ENCODE measurements at regions of chr19 and their contacts with region 1.

Region 1: DNA sequence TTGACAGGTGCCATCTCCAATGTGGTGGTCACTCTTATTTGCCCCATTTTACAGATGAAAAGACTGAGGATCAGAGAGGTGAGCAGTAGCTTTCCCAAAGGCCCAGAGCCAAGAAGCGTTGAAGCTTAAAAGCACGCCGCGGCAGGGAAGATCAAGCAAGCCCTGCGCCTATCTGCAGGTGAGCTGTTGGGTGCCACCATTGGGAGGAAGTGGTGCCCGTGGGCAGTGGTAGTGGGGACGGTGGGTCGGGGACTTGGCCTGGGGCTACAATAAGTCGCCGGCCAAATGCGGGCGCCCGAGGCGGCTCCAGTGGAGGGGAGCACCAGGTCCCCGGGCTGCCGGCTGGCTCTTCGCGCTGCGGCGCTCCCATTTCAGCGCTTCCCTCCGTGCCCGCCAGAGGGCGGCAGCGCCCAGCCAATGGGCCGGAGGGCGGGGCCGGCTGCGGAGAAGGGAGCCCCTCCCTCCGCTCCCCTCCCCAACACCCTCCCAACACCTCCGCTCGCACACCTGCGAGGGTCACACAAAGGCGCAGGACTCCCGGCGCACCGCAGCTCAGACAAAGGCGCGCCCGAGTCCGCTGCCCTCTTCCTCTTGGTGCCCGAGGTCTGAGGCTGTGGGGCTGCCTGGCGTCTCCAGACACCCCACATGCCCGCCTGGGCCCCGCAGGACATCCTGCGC is 744 bp upstream of the POU2F2 start:
- DNase-seq: peak; percentile 81
- H3K4me3 Mint-ChIP-seq: peak overlapping the region; percentile 92
- H3K27ac Mint-ChIP-seq: peak overlapping the region; percentile 91
- H3K4me1 Mint-ChIP-seq: peaks cover 46% of the 10 kb centered on the region
- H3K27me3 Mint-ChIP-seq: no peaks in the 10 kb centered on the region

Region 2: DNA sequence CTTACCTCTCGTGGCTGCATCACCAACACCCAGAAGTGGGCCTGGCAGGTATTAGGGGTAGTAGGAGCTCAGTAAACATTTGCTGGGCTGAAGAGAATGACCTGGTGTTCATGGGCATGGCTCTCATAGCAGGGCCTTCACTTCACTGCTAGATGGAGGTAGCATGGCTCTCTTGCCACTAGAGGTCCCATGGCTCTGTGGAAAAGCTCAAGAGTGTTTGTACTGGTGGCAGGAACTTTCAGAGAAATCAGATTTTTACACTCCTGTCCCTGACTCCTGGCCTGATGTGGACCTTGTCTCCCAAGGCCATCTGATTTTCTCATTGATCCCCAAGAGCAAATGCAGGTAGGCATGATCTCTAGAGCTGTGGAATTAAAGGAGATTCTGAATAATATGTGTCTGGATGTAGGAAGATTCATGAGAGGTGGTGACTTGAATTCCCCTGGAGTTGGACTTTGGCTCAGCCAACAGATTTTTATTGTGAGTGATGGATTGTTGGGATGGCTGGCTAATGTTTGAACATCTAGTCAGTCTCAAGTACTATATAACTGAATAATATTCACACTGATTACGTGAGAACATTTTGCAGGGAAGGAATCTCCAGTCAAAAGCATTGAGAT is 51.3 kb before region 1 on chr19:
- intact Hi-C with region 1: no loop called
- DNase-seq: no peak
- H3K4me3 Mint-ChIP-seq: no peak overlapping the region
- H3K27ac Mint-ChIP-seq: no peak overlapping the region
- H3K4me1 Mint-ChIP-seq: peaks cover 26% of the 10 kb centered on the region
- H3K27me3 Mint-ChIP-seq: no peaks in the 10 kb centered on the region

Region 3: GRCh38 chr19:42121656-42122069 is 11.3 kb before region 1 on chr19:
- intact Hi-C with region 1: loop called (anchors 1 kb)
- DNase-seq: peak; percentile 57
- H3K4me3 Mint-ChIP-seq: peak overlapping the region; percentile 71
- H3K27ac Mint-ChIP-seq: peak overlapping the region; percentile 95
- H3K4me1 Mint-ChIP-seq: peaks cover 49% of the 10 kb centered on the region
- H3K27me3 Mint-ChIP-seq: no peaks in the 10 kb centered on the region

Region 4: GRCh38 chr19:42184401-42184861 is 51.4 kb after region 1 on chr19:
- intact Hi-C with region 1: loop called (anchors 1 kb)
- DNase-seq: peak; percentile 56
- H3K4me3 Mint-ChIP-seq: no peak overlapping the region
- H3K27ac Mint-ChIP-seq: peak overlapping the region; percentile 56
- H3K4me1 Mint-ChIP-seq: peaks cover 29% of the 10 kb centered on the region
- H3K27me3 Mint-ChIP-seq: peaks cover 14% of the 10 kb centered on the region

Region 5: DNA sequence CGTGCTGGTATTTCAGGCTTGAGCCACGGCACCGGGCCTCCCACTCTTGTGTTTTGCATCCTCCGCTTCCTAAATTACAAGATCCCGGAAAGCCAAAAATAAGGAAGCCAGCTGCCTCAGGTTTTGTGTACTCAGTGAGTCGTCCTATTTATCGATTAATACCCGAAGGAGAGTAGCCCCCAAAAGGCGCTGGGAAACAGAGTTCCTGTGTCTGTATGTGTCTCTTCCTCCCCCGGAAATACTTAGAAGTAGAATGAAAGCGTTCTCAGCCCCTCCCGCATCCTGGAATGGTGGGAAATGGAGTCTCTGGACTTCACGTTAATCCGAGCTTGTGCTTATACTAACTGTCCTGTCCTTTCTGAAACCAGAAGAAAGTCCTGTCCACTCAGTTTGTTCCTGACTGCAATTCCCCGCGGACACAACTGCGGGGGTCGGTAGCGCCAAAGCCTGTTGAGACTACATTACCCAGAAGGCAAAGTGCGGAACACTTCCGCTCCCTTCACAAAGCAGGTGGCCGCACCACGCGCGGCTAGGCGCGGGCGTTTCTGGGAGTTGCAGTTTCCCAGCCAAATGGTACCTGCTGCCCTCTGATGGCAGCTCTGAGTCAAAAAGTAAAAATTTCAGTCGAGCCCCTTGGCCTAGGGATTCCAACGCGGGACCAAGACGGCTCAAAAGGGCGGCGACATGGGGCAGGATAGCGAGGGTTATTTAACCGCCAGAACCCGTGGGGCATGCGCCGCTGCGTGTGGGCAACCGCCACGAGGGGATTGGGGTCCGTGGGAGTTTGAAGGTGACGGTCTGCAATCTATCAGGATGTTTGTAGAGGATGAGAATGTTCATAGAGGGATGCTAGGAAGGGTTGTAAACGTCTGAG is 111.6 kb after region 1 on chr19:
- intact Hi-C with region 1: loop called (anchors 2 kb)
- DNase-seq: peak; percentile 92
- H3K4me3 Mint-ChIP-seq: peak overlapping the region; percentile 88
- H3K27ac Mint-ChIP-seq: peak overlapping the region; percentile 89
- H3K4me1 Mint-ChIP-seq: peaks cover 32% of the 10 kb centered on the region
- H3K27me3 Mint-ChIP-seq: no peaks in the 10 kb centered on the region

Region 6: DNA sequence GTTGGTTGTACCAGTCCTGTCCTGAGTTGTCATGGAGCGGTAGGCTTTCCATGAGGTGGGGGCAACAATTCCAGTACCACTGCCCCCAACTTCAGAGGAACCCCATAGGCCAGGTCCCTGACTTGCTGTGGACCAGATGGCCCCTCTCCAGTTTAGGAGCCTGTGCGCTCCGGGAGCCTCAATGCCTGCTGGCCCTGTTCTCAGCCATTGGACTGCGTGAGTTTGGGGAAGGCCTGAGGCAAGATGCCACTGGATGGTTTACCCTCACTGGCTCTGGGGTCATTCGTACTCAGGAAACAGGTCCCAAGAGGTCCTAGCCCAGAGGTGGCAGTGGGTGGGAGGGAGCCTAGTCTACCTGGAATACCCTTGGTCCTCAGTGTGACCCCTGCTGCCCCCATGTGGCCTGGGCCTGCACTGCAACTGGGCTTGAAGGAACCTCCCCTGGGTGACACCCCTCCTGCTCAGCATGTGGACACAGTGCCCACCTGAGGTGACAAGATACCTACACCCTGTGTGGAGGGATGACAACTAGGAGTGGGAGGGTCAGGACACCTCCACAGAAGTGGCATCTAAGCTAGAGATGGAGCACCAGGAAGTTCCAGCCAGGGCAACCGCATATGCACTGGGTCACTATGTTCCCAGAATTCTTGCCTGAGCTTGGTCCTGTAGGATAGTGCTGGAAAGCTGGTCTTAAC is 163.0 kb after region 1 on chr19:
- intact Hi-C with region 1: loop called (anchors 5 kb)
- DNase-seq: peak; percentile 80
- H3K4me3 Mint-ChIP-seq: no peak overlapping the region
- H3K27ac Mint-ChIP-seq: no peak overlapping the region
- H3K4me1 Mint-ChIP-seq: no peaks in the 10 kb centered on the region
- H3K27me3 Mint-ChIP-seq: no peaks in the 10 kb centered on the region

Measured in activated T-helper 2 cell treated with anti-CD3 and anti-CD28 coated beads, Interferon-gamma antibody, Interleukin-2, Interleukin-4, amounts not matched to agents 10 μg/mL and 5 μg/mL and 100 μg/mL, durations not matched to agents 14 hours and 24 hours and 36 hours (primary cell).